ENCODE measurements at regions of chr9 and their contacts with region 1.

Region 1: GRCh38 chr9:36560857-36561221 is 11.9 kb upstream of the MELK start:
- DNase-seq: no peak
- ATAC-seq: no peak
- H3K4me3 ChIP-seq: no peak overlapping the region
- H3K4me3 Mint-ChIP-seq: no peak overlapping the region
- H3K27ac ChIP-seq: no peak overlapping the region
- H3K27ac Mint-ChIP-seq: no peak overlapping the region
- H3K4me1 ChIP-seq: no peaks in the 10 kb centered on the region
- H3K4me1 Mint-ChIP-seq: peaks cover under 1% of the 10 kb centered on the region
- H3K27me3 ChIP-seq: peaks cover 0 to 3% of the 10 kb centered on the region in 2 experiments
- H3K27me3 Mint-ChIP-seq: no peaks in the 10 kb centered on the region
- CTCF ChIP-seq: no peak

Region 2: GRCh38 chr9:36415822-36416515 is 144.9 kb before region 1 on chr9:
- CTCF ChIA-PET with region 1: interaction called, 32 read pairs
- POLR2A ChIA-PET with region 1: no interaction called
- intact Hi-C with region 1: no loop called
- DNase-seq: no peak
- ATAC-seq: no peak
- H3K4me3 ChIP-seq: no peak overlapping the region
- H3K4me3 Mint-ChIP-seq: no peak overlapping the region
- H3K27ac ChIP-seq: no peak overlapping the region
- H3K27ac Mint-ChIP-seq: no peak overlapping the region
- H3K4me1 ChIP-seq: no peaks in the 10 kb centered on the region
- H3K4me1 Mint-ChIP-seq: peaks cover 24% of the 10 kb centered on the region
- H3K27me3 ChIP-seq: no peaks in the 10 kb centered on the region
- H3K27me3 Mint-ChIP-seq: no peaks in the 10 kb centered on the region
- CTCF ChIP-seq: no peak

Region 3: DNA sequence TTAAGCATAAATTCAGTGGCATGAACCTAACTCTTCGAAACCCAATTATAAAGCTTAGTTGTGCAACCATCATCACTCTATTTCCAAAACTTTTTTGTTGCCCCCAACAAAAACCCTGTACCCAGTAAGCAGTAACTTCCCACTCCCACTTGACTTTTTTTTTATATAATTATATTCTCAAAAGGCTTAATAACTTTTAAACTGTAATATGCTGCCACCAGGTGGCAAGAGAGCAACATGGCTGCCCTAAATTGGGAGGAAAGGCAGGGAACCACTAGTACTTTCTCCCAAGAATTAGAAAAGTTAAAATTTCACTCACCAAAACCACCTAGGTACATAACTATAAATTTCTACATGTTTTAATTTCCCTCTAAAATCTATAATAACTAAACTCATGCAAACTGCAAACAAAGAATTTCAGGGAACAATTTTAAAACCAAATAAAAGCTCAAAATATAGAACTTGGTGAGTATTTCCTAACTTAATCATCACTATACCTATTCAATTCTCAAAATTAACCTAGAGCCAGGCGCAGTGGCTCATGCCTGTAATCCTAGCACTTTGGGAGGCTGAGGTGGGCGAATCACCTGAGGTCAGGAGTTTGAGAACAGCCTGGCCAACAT is 110.6 kb before region 1 on chr9:
- CTCF ChIA-PET with region 1: interaction called, 58 read pairs
- POLR2A ChIA-PET with region 1: no interaction called
- intact Hi-C with region 1: loop called (anchors 1 kb)
- DNase-seq: peak in 3 of 9 experiments; percentile 41 to 66 (median 56)
- ATAC-seq: no peak
- H3K4me3 ChIP-seq: no peak overlapping the region
- H3K4me3 Mint-ChIP-seq: no peak overlapping the region
- H3K27ac ChIP-seq: no peak overlapping the region
- H3K27ac Mint-ChIP-seq: no peak overlapping the region
- H3K4me1 ChIP-seq: peaks cover 14% of the 10 kb centered on the region
- H3K4me1 Mint-ChIP-seq: peaks cover 38% of the 10 kb centered on the region
- H3K27me3 ChIP-seq: no peaks in the 10 kb centered on the region
- H3K27me3 Mint-ChIP-seq: no peaks in the 10 kb centered on the region
- CTCF ChIP-seq: peak; percentile 75

Region 4: GRCh38 chr9:36461323-36461722 is 99.5 kb before region 1 on chr9:
- CTCF ChIA-PET with region 1: interaction called, 37 read pairs
- POLR2A ChIA-PET with region 1: no interaction called
- intact Hi-C with region 1: no loop called
- DNase-seq: peak in 1 of 9 experiments; percentile 30
- ATAC-seq: no peak
- H3K4me3 ChIP-seq: no peak overlapping the region
- H3K4me3 Mint-ChIP-seq: no peak overlapping the region
- H3K27ac ChIP-seq: peak overlapping the region in 1 of 2 experiments; percentile 33
- H3K27ac Mint-ChIP-seq: peak overlapping the region; percentile 73
- H3K4me1 ChIP-seq: peaks cover 19% of the 10 kb centered on the region
- H3K4me1 Mint-ChIP-seq: peaks cover 57% of the 10 kb centered on the region
- H3K27me3 ChIP-seq: no peaks in the 10 kb centered on the region
- H3K27me3 Mint-ChIP-seq: no peaks in the 10 kb centered on the region
- CTCF ChIP-seq: no peak

Region 5: DNA sequence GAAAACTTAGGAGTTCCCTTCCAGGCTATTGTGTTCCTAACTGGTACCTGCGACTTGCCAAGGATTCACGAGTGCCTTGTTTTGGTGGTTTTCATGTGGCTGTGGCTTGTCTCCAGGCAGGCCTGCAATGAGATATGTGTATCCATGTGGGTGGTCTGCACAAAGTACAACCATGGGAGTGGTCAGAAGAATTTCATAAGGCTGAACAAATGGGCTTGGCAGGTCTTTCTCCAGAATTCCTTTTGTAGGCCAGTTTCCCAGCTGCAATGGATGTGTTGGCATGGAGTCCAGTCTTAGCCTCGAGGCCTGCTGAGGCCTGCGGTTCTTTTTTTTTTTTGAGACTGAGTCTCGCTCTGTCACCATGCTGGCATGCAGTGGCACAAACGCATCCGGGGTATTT is 16.9 kb before region 1 on chr9:
- CTCF ChIA-PET with region 1: interaction called, 11 read pairs
- POLR2A ChIA-PET with region 1: no interaction called
- intact Hi-C with region 1: no loop called
- DNase-seq: no peak
- ATAC-seq: no peak
- H3K4me3 ChIP-seq: no peak overlapping the region
- H3K4me3 Mint-ChIP-seq: no peak overlapping the region
- H3K27ac ChIP-seq: no peak overlapping the region
- H3K27ac Mint-ChIP-seq: no peak overlapping the region
- H3K4me1 ChIP-seq: no peaks in the 10 kb centered on the region
- H3K4me1 Mint-ChIP-seq: no peaks in the 10 kb centered on the region
- H3K27me3 ChIP-seq: no peaks in the 10 kb centered on the region
- H3K27me3 Mint-ChIP-seq: no peaks in the 10 kb centered on the region
- CTCF ChIP-seq: no peak

Region 6: GRCh38 chr9:36572515-36573418 is 11.9 kb after region 1 on chr9 and contains the start of gene MELK:
- CTCF ChIA-PET with region 1: interaction called, 19 read pairs
- POLR2A ChIA-PET with region 1: no interaction called
- intact Hi-C with region 1: no loop called
- DNase-seq: peak; percentile 69 to 91 (median 82)
- ATAC-seq: peak; percentile 83
- H3K4me3 ChIP-seq: peak within 1 kb of the TSS; percentile 70
- H3K4me3 Mint-ChIP-seq: peak within 1 kb of the TSS; percentile 87
- H3K27ac ChIP-seq: peak within 1 kb of the TSS; percentile 63 to 72
- H3K27ac Mint-ChIP-seq: peak within 1 kb of the TSS; percentile 55
- H3K4me1 ChIP-seq: peaks cover 10% of the 10 kb centered on the region
- H3K4me1 Mint-ChIP-seq: peaks cover 9% of the 10 kb centered on the region
- H3K27me3 ChIP-seq: no peaks in the 10 kb centered on the region
- H3K27me3 Mint-ChIP-seq: peaks cover 3% of the 10 kb centered on the region
- CTCF ChIP-seq: no peak
- total RNA-seq, gene MELK: 0.24 TPM in 1 of 2 experiments, not detected in the other

Region 7: DNA sequence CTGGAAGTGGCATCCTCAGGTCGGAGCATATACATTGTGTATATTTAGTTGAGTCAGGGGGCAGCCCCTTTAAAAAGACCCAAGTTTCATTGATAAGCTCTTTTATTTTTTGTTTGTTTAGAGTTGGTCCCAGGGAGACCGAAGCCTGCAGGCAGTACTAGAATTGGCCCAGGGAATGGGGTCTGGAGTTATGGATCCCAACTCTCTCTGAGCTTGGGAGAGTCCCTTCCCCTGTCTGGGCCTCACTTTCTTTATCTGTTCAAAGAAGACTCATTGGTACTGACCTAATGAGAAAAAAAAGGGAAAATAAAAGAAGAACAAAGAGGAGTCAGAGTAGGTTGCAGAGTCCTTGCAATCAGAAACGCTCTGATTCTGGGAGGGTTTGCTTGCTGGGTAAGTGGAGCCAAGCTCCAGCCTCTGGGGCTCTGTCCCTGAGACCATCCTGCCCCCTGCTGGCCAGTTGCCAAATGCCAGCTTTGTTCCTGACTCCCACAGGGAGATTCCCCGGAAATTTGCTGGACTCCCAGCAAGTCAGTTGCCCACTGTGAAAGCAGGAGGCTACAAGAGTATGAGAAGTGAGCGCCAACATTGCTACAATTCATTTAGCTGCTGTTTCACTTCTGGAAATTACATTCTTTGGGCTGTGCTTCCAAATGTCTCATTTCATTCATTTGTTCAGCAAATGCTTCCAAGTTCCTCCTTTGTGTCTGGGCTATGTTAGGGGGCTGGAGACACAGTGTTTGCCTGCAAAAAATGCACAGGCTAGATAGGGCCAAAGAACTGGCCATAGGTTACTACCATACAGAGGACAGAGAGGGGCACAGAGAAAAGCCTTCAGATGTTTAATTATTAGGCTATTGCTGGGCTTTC is 168.0 kb after region 1 on chr9:
- CTCF ChIA-PET with region 1: interaction called, 14 read pairs
- POLR2A ChIA-PET with region 1: no interaction called
- intact Hi-C with region 1: loop called in 1 of 2 experiments (anchors 5 kb)
- DNase-seq: peak; percentile 9 to 72 (median 61)
- ATAC-seq: peak; percentile 38
- H3K4me3 ChIP-seq: no peak overlapping the region
- H3K4me3 Mint-ChIP-seq: no peak overlapping the region
- H3K27ac ChIP-seq: no peak overlapping the region
- H3K27ac Mint-ChIP-seq: no peak overlapping the region
- H3K4me1 ChIP-seq: no peaks in the 10 kb centered on the region
- H3K4me1 Mint-ChIP-seq: no peaks in the 10 kb centered on the region
- H3K27me3 ChIP-seq: no peaks in the 10 kb centered on the region
- H3K27me3 Mint-ChIP-seq: no peaks in the 10 kb centered on the region
- CTCF ChIP-seq: peak; percentile 89

Region 8: DNA sequence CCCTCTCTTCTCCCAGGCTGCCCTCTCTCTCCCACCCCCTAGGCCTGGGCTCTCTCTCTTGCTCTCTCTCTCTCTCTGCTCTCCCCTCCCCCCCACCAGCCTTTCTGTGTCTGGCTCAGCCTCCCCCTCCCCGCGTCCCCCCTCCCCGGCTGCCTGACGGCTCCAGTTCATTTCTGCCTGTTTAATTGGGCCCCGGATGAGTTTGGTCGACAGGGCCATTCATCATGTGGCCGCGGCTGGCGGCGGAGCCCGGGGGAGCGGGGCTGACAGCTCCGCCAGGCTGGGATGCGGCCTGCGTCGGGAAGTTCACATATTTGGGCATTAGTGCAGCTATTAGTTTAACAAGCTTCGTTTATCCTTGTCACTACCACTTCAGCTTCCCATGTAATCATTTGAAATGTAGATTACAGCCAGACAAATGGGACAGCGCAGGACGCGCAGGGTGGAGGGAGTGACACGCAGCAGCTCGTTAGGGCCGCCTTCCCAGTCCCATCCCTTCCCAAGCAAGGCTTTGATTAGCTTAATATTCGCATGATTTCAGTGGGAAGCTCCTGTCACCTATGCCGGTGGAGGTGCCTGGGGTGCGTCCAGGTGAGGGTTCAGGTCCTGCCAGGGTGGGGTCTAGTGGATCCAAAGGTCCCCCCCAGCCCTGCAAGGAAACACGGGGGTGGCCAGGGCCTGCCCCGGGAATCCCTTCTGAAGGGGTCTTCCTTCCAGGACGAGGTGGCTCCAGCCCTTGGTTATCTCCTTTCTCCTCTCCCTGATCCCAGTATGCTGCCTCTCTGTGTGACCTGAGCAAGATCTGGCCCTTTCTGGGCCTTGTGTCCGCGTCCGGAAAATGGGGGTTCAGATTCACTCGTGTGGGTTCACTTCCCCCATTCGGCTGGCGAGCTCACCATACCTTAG is 258.4 kb after region 1 on chr9:
- CTCF ChIA-PET with region 1: no interaction called
- POLR2A ChIA-PET with region 1: no interaction called
- intact Hi-C with region 1: no loop called
- DNase-seq: no peak
- ATAC-seq: no peak
- H3K4me3 ChIP-seq: no peak overlapping the region
- H3K4me3 Mint-ChIP-seq: no peak overlapping the region
- H3K27ac ChIP-seq: no peak overlapping the region
- H3K27ac Mint-ChIP-seq: no peak overlapping the region
- H3K4me1 ChIP-seq: no peaks in the 10 kb centered on the region
- H3K4me1 Mint-ChIP-seq: peaks cover 3% of the 10 kb centered on the region
- H3K27me3 ChIP-seq: peaks cover 0 to 3% of the 10 kb centered on the region in 2 experiments
- H3K27me3 Mint-ChIP-seq: peaks cover 30% of the 10 kb centered on the region
- CTCF ChIP-seq: no peak

Measured in CD8-positive, alpha-beta T cell (primary cell).